ENCODE measurements at regions of chr1 and their contacts with region 1.

Region 1: DNA sequence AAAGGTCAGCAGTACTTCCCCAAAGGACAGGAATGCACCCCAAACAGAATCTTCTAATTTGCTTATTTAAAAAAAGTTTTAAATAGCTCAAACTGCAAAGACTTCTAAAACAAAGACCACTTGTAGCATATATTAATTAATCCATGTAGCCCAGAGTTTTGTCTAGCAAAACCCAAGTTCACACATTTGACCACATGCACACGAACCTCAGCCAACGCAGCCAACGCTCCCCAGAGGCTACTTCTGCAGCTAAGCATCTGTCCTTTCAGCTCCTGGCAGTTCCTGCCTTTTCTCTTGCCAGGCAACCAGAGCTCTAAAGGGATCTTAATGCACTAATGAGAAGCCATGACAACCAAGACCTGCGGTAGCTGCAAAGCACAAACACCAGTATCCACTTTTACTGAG is 89.6 kb downstream of the RERE start:
- DNase-seq: peak in 5 of 10 donors; percentile 21 to 86 (median 22)

Region 2: DNA sequence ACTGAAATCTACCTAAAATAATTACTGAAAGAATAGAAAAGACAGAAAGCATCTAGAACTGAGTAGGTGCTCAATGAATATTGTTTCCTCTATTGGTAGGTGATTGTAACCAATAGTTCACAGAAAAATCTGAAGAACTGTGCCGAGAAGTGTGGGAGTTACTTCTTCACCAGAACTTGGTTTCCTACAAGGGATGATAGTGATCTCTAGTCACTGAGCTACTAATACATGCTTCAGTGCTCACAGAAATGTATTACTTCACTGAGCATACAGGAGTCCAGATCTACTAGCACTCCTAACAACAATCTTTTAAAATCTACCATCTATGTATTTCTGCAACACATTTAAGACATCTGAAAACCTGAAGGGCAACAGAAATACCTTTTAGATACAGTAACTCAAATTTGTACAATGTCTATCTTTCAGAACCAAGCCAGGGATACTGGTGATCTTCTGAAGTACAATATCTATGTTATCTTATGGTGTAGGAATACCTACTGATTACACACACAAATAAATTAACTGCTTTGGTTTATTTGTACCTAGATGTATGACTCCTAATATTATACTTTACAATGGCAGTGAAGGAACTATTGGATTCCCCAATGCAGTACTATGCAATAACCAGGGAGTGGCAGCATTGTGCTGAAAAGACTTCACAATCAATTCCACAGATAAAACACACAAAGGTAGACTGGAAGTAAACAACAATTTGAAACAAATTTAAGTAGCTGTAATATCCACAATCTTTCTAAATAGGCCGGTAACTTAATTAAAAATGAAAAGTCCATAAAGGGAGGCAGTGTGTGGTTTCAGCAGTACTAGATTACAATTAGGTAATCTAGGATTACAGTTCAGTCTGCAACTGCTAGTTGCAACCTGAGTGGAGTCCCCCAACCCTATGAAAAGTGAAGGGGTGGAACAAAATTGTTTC is 166.9 kb before region 1 on chr1:
- intact Hi-C with region 1: loop called (anchors 2 kb)
- DNase-seq: peak in 2 of 10 donors; percentile 19 to 34

Measured in posterior cingulate gyrus (tissue), 11 donors.